ENCODE measurements at regions of chr15 and their contacts with region 1.

Region 1: DNA sequence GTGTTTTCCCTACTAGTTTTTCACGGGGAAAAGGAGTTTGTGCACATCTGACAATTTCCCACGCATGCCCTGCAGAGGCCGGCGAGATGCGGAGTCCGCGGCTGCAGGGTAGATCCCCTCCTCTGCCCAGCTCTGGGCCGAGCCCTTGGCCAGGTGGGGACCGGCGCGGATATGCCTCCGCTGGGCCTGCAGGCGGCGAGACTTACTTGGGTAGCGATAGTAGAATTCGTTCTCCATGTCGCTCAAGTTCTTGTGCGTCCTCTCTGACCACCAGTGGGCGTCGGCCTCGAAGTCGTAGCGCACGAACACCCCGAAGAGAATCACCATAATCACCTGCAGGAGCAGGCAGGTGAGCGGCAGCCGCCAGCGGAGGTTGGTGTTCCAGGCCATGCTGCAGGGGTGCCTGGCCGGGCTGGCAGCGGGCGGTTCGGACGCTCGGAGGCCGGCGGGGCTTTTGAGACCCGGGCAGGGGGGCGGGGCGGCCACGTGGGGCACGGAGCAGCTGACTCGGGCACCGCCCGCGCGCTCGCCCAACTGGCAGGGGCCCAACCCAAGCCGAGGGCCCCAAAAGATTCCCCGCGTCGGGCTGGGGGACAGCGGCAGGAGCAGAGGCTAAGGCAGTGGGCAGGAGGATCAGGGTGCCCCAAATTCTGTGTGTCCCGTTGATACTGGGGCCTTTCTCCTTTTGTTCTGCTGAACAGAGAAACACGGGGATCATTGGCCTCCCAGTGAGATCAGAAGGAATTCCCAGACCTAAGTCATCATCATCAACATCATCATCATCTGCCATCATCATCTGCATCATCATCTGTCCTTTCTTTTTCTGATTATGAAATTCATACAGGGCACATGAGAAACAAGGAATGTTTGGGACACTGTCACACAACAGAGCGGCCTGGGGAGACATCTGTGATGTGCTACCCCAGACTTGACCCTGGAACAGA is at the start of gene RHCG:
- DNase-seq: peak in 1 of 2 experiments; percentile 59
- H3K4me3 ChIP-seq: no peak within 1 kb of the TSS
- H3K27ac ChIP-seq: no peak within 1 kb of the TSS
- H3K4me1 ChIP-seq: peaks cover 43% of the 10 kb centered on the region
- H3K27me3 ChIP-seq: no peaks in the 10 kb centered on the region
- CTCF ChIP-seq: no peak
- total RNA-seq, gene RHCG: 0.26 and 0.60 TPM in 2 replicates

Region 2: DNA sequence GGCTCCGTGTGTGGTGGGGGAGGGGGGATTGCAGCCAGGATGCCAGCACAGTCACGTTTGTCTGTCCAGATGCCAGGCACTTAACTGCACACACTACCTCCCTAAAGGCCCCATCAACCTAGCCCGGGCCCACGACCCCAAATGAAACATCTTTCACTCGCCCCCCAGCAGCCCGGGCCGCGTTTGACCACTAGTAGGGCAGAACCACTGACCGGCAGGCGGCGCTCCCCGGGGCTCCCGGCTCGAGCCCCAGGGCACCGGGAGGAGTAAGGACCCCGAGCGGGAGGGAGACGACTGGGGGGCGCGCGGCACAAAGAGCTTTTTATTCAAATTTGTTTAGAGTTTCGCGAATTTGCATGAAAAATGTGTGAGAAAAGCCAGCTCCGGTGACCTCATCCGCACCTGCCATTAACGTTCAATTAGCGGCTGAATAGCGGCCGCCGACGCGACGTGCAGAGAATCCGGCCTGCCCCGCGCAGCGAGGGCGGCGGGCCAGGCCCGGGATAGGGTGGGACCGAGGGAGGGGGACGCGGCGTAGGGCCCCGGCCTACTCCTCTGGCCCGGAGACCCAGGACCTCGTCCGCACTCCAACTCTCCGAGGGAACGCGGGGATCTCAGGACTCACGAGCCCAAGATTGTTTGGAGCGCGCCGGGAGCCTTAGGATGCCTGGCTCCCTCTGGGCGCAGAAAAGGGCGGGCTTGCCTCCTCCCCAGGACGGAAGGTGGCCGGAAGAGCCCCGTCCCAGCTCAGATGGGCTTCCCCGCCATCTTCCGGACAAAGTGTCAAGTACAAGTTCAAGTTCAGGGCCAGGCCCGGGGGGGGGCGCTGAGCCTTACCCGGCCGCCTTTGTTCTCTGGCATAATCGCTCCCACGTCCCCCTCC is 96.9 kb before region 1 on chr15:
- CTCF ChIA-PET with region 1: no interaction called
- POLR2A ChIA-PET with region 1: interaction called, 11 read pairs
- intact Hi-C with region 1: no loop called
- DNase-seq: peak in 1 of 2 experiments; percentile 42
- H3K4me3 ChIP-seq: peak overlapping the region; percentile 50; the same call in 1 of the 2 replicates
- H3K27ac ChIP-seq: no peak overlapping the region
- H3K4me1 ChIP-seq: peaks cover 15% of the 10 kb centered on the region; the same call in 1 of the 2 replicates
- H3K27me3 ChIP-seq: no peaks in the 10 kb centered on the region
- CTCF ChIP-seq: 0 out of 2 replicates have a peak, but pooled peaks have one; percentile 26

Region 3: GRCh38 chr15:89414571-89414970 is 81.9 kb before region 1 on chr15:
- CTCF ChIA-PET with region 1: no interaction called
- POLR2A ChIA-PET with region 1: no interaction called
- intact Hi-C with region 1: no loop called
- DNase-seq: no peak
- H3K4me3 ChIP-seq: no peak overlapping the region
- H3K27ac ChIP-seq: no peak overlapping the region
- H3K4me1 ChIP-seq: no peaks in the 10 kb centered on the region
- H3K27me3 ChIP-seq: peaks cover 82% of the 10 kb centered on the region
- CTCF ChIP-seq: no peak

Region 4: GRCh38 chr15:89531796-89532537 is 35.5 kb after region 1 on chr15:
- CTCF ChIA-PET with region 1: no interaction called
- POLR2A ChIA-PET with region 1: no interaction called
- intact Hi-C with region 1: loop called (anchors 1 kb)
- DNase-seq: peak in 1 of 2 experiments; percentile 46
- H3K4me3 ChIP-seq: no peak overlapping the region
- H3K27ac ChIP-seq: no peak overlapping the region
- H3K4me1 ChIP-seq: no peaks in the 10 kb centered on the region
- H3K27me3 ChIP-seq: no peaks in the 10 kb centered on the region
- CTCF ChIP-seq: no peak

Region 5: GRCh38 chr15:89556413-89557262 is 60.2 kb after region 1 on chr15:
- CTCF ChIA-PET with region 1: interaction called, 3 read pairs
- POLR2A ChIA-PET with region 1: interaction called, 4 read pairs
- intact Hi-C with region 1: loop called (anchors 1 kb)
- DNase-seq: peak; percentile 56 to 77
- H3K4me3 ChIP-seq: no peak overlapping the region
- H3K27ac ChIP-seq: no peak overlapping the region
- H3K4me1 ChIP-seq: peaks cover 4% of the 10 kb centered on the region
- H3K27me3 ChIP-seq: no peaks in the 10 kb centered on the region
- CTCF ChIP-seq: peak; percentile 85

Region 6: GRCh38 chr15:89575146-89575655 is 78.8 kb after region 1 on chr15 and contains the start of gene TICRR:
- CTCF ChIA-PET with region 1: interaction called, 3 read pairs
- POLR2A ChIA-PET with region 1: no interaction called
- intact Hi-C with region 1: loop called (anchors 1 kb)
- DNase-seq: peak; percentile 96 to 99
- H3K4me3 ChIP-seq: peak within 1 kb of the TSS; percentile 71
- H3K27ac ChIP-seq: peak within 1 kb of the TSS; percentile 59
- H3K4me1 ChIP-seq: peaks cover 24% of the 10 kb centered on the region
- H3K27me3 ChIP-seq: no peaks in the 10 kb centered on the region
- CTCF ChIP-seq: no peak
- total RNA-seq, gene TICRR: 17.8 and 23.6 TPM in 2 replicates